ENCODE measurements at regions of chr6 and their contacts with region 1.

Region 1: GRCh38 chr6:5214570-5215052 is 46.1 kb downstream of the LYRM4 start:
- DNase-seq: peak; percentile 41
- H3K4me3 ChIP-seq: no peak overlapping the region
- H3K27ac ChIP-seq: peak overlapping the region in 1 of 2 donors; percentile 4
- H3K4me1 ChIP-seq: peaks cover 8% of the 10 kb centered on the region
- H3K27me3 ChIP-seq: no peaks in the 10 kb centered on the region
- CTCF ChIP-seq: peak in 3 of 4 experiments; percentile 52 to 55 (median 53)
- POLR2A ChIP-seq: no peak

Region 2: DNA sequence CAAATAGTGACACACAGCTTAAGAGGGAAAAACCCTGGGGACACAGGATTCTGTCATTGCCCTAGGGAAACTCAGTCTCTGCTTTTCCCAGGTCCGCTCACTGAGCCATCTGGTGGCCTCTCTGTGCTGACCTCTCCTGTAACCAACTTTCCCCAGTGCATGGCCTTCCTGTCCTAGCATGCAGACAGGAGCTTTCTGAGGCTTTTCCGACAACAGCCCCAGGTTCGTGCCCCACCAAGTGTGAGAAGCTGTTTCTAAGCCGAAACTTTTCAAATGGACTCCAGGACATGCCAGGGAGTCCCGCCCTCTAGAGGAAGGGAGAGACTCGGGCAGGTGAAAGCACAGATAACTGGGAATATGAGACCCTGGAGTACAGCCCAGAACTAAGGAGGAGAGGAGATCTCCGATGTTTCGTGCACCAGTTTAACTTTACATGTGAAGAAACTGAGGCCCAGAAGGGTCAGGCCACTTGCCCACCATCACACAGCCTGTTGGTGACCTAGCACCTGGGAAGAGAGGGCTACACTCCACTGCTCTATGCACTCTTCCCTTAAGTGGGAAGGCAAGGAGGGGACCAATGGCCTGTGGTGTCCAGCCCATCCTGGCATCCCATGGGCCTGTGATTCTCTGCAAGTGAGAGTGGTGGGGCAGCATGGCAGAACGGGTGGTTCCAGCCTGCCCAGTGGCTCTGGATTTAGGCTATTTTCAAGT is 256.9 kb before region 1 on chr6:
- intact Hi-C with region 1: no loop called
- DNase-seq: no peak
- H3K4me3 ChIP-seq: no peak overlapping the region
- H3K27ac ChIP-seq: no peak overlapping the region
- H3K4me1 ChIP-seq: no peaks in the 10 kb centered on the region
- H3K27me3 ChIP-seq: no peaks in the 10 kb centered on the region
- CTCF ChIP-seq: no peak
- POLR2A ChIP-seq: no peak

Region 3: DNA sequence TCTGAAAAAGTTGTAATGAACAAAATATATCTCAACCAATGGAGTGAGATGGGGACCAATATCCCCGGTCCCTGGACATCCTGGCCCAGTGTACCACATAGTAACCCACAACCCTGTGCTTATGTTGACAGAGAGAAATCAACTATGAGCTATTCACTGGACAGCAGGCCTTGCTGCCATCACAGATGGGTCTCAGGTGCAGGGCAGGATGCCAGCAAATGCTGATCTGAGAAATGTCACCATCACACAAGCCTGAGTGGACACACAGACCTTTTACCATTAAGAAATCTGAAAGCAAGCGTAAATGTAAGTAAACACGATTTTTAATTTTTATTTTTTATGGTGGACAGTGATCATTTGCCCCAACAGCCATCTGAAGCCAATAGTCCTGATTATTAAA is 219.9 kb before region 1 on chr6:
- intact Hi-C with region 1: no loop called
- DNase-seq: no peak
- H3K4me3 ChIP-seq: no peak overlapping the region
- H3K27ac ChIP-seq: no peak overlapping the region
- H3K4me1 ChIP-seq: no peaks in the 10 kb centered on the region
- H3K27me3 ChIP-seq: no peaks in the 10 kb centered on the region
- CTCF ChIP-seq: no peak
- POLR2A ChIP-seq: no peak

Region 4: GRCh38 chr6:6547110-6547879 is 1332.7 kb after region 1 on chr6:
- intact Hi-C with region 1: loop called (anchors 5 kb)
- DNase-seq: peak; percentile 84
- H3K4me3 ChIP-seq: peak overlapping the region; percentile 23 to 27
- H3K27ac ChIP-seq: no peak overlapping the region
- H3K4me1 ChIP-seq: no peaks in the 10 kb centered on the region
- H3K27me3 ChIP-seq: peaks cover 3% of the 10 kb centered on the region
- CTCF ChIP-seq: peak; percentile 84 to 99 (median 92)
- POLR2A ChIP-seq: no peak